Left cardiac atrium (tissue), 4 donors: ENCODE measurements at regions of chr19 and their contacts with region 1.

Region 1: DNA sequence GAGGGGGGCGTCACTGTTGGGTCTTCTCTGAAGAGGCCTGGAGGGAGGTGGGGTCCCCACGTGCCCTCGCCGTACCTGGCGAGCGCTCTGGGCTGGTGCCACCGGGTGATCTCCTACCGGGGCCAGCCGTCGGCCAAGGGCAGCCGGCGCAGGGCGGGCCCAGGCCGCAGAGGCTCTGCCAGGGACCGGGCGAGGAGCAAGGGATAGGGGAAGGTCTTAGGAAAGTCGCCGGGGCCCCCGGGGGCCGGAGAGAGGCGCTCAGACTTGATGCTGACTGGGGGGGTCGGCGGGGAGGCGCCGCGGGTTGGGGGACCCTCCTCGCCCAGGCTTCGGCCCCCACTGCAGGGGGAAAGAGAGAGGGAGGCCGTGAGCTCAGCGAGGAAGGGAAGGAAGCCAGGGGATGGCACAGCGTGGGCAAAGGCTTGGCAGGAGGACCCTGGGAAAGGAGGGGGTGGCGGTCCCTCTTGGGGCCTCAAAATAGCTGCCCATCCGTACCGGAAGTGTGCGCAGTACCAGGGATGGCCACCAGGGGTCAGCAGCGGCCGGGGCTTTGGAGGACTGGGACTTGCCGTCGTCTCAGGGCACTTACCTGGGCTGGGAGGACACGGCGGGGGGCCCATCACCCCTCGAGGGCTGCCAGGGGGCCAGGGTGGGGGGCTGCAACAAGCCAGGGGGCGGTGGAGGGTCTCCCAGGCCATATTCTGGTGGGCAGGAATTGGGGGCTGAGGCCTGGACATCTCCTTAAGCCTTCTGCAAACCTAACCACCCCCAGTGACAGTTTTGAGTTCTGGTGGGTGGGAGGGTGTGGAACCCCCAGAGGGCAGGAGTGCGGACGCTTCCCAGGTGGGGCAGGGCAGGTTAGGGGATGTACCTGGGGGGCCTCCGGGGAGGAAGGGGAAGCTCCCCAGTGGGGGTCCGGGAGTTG is 7.7 kb upstream of the TMEM161A start:
- DNase-seq: peak; percentile 80
- ATAC-seq: peak; percentile 70 to 81

Region 2: DNA sequence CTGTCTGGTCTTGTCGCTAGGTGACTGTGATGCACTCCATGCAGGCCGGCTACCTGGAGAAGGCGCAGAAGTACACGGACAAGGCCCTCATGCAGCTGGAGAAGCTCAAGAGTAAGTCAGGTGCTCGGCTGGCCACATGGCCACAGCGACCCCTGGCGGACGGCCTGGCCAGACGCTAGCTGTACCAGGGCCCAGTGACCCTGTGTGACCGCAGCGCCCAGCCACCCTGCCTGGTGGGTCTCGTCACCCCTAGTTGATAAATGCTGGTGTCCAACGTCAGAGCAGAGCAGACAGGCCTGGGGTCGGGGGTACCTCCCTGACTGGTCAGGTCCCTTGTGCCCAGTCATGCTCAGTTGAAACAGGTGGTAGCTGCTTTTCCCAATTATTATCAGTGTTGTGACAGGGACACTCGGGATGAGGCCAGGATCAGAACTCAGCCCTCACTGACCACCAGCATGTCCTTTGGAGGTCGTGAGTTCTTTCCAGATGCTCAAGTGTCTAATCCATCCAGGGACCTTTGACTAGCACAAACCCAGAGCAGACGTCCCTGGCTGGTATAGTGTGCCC is 196.9 kb after region 1 on chr19:
- intact Hi-C with region 1: loop called in 1 of 2 experiments (anchors 10 kb)
- DNase-seq: peak; percentile 54
- ATAC-seq: peak; percentile 66 to 73

Region 3: DNA sequence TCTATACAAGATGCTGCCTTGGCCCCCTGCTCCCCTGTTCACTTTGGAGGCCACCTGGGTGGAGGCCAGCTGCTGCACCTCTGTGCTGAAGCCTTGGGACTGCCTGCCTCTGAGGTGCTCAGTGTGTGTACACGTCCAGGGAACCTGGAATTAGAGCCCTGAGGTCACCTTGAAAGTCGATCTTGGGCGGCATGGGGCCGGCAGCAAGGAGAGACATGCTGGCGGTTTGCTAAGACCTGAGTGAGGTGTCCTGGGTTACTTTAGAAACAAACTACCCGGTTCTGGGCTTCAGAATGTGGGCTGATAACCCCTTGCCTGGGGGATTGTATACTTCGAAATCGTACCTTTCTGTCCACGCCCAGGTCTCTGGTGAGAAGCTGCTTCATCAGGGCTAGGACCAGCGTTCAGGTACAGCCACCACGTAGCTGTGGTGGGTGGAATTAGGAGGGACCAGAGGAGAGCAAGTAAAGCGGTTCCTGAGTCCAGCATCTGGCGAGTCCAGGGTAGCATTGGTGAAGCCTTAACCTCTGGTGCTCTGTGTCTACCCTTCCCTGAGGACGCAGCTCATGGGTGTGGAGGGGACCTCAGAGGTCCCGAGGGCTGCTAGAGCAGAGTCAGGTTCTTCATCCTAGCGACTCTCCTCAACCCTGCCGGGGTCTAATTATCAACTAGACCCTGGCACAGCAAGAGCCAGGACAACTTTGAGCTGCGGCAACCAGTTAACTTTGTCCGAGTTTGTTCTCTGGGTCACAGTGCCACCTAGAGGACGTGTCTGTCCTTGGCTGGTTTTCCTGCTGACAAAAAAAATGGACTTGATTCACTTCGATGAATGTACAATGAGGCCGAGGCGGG is 344.1 kb after region 1 on chr19:
- intact Hi-C with region 1: loop called in 1 of 2 experiments (anchors 5 kb)
- DNase-seq: peak; percentile 75
- ATAC-seq: peak; percentile 53 to 54